ENCODE measurements at regions of chr6 and their contacts with region 1.

Region 1: GRCh38 chr6:6676910-6677441 is 88.5 kb downstream of the LY86 start:
- DNase-seq: peak; percentile 59 to 84 (median 82)
- H3K4me3 ChIP-seq: no peak overlapping the region
- H3K27ac ChIP-seq: no peak overlapping the region
- H3K4me1 ChIP-seq: no peaks in the 10 kb centered on the region
- H3K27me3 ChIP-seq: no peaks in the 10 kb centered on the region
- CTCF ChIP-seq: peak; percentile 81 to 95 (median 89)
- EP300 ChIP-seq: no peak
- POLR2A ChIP-seq: no peak

Region 2: GRCh38 chr6:6193221-6193745 is 483.7 kb before region 1 on chr6:
- intact Hi-C with region 1: no loop called
- DNase-seq: no peak
- H3K4me3 ChIP-seq: no peak overlapping the region
- H3K27ac ChIP-seq: no peak overlapping the region
- H3K4me1 ChIP-seq: no peaks in the 10 kb centered on the region
- H3K27me3 ChIP-seq: no peaks in the 10 kb centered on the region
- CTCF ChIP-seq: no peak
- EP300 ChIP-seq: no peak
- POLR2A ChIP-seq: no peak

Region 3: GRCh38 chr6:7196019-7196402 is 519.0 kb after region 1 on chr6:
- intact Hi-C with region 1: no loop called
- DNase-seq: no peak
- H3K4me3 ChIP-seq: no peak overlapping the region
- H3K27ac ChIP-seq: no peak overlapping the region
- H3K4me1 ChIP-seq: peaks cover 5% of the 10 kb centered on the region
- H3K27me3 ChIP-seq: no peaks in the 10 kb centered on the region
- CTCF ChIP-seq: no peak
- EP300 ChIP-seq: no peak
- POLR2A ChIP-seq: no peak

Region 4: DNA sequence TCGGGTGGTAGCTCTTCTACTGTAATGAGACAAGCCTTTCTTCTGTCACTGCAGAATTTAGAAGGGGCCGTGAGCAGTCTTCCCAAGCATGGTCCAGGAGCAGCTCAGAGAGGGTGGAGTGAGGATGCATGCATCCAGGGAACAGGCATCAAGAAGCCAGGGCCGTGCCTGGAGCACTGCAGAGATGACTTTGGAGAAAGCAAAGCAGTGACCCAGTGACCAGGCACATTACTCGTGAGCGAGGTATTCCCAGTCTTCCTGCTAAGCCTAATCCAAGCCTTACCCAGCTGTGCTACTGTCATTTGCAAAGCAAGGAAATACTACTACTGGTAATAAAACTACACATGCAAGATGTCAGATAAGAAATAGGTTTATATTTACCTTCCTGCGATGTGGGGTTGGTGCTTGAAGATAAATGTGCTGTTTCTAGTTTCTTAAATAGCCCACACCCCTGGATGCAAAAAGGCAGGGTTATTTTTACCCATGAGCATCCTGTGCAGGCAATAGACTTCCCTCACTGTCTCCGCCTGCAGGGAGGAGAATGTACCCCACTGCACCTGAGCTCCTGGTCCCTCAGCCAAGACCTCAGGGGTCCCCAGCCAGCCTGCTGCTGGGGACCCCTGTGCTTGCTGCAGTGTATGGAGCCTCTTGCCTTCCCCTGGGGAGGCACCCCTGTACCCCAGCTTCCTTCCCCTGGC is 573.1 kb after region 1 on chr6:
- intact Hi-C with region 1: loop called in 1 of 4 experiments (anchors 5 kb)
- DNase-seq: no peak
- H3K4me3 ChIP-seq: no peak overlapping the region
- H3K27ac ChIP-seq: no peak overlapping the region
- H3K4me1 ChIP-seq: no peaks in the 10 kb centered on the region
- H3K27me3 ChIP-seq: no peaks in the 10 kb centered on the region
- CTCF ChIP-seq: no peak
- EP300 ChIP-seq: no peak
- POLR2A ChIP-seq: no peak